GM12878 (cell line): ENCODE measurements at regions of chr6 and their contacts with region 1.

Region 1: DNA sequence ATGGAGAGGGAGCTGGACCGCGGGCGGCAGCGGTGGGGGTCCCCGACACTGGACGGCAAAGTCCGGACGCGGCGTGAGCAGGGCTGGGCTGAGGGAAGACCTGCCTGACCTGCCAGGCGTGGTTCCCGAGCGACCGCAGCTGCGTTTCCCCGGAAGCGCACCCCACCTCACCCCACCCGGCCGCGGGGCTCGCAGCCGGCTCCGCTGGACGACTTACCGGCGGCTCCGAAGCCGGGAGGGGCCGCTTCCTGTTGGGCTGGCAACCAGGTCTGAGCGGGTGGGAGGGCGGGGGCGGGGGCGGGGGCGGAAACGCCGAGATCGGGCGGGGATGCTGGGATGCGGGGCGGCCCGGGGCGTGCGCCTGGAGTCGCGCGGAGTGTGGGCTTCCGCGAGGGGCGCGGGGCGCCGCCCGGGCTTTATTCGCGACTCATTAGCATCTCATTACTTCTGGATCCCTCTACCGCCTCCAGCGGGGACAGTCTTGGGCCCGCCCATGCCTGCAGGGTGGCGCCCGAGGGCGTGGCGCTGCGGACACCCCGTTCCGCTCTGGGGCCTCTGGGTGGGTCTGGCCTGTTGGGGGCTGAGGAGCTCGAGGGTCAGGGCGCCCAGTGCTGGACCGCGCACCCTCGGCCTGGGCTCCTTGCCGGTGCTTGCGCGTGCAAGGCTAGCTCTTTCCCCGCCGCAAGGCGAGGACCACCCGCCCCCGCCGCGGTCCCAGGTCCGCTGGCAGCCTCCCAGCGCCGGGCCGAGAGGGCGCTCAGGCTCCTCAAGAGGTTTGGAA is at the start of gene MICAL1:
- DNase-seq: peak; percentile 45
- ATAC-seq: peak; percentile 78
- H3K4me3 ChIP-seq: peak within 1 kb of the TSS; percentile 89
- H3K27ac ChIP-seq: peak within 1 kb of the TSS; percentile 98
- H3K4me1 ChIP-seq: peaks cover 54% of the 10 kb centered on the region
- H3K27me3 ChIP-seq: no peaks in the 10 kb centered on the region
- CTCF ChIP-seq: peak in 2 of 3 experiments; percentile 19 to 45; a peak in 4 of 6 replicates
- EP300 ChIP-seq: 0 out of 4 replicates have a peak, but pooled peaks of 1 of the 2 experiments have one; percentile 20
- POLR2A ChIP-seq: peak; percentile 82
- RAD21 ChIP-seq: no peak
- polyA plus RNA-seq, gene MICAL1: 0.32 to 1.3 TPM

Region 2: DNA sequence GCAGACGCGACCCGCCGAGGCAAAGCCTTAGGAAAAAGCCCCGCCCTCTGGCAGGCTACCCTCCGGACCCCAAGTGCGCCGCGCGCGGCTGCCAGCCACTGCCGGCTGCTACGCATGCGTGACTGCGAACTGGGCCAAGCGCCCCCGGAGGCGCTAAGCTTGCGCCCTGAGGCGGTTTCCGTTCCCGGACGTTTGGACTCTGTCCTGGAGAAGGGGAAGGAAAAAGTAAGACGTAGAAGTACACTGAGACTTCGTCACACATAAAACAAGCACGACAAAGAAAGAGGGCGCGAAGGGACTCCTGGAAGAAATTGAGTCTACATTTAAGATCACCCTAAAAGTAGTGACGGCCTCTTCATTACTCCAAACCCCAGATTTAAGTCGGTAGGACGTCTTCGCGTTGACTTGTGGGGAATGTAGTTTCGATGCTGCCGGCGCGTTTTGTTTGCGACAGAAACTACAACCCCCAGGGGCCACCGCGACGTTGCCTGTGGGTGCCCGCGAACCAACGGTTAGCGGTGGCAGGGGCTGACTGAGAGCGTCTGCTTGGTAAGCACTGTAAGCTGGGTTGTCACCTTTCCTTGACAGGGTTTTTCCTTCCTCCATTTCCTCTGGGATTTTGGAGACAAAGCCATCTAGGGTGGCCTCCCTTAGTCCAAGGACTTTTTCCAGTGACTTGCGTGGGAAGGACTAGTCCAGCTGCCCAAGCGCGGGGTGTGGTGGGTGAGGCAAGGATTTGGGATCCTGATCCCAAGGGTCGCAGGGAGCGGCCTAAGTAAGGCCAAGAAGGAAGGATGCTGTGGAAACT is 360.5 kb before region 1 on chr6 and contains the start of gene CEP57L1:
- CTCF ChIA-PET with region 1: no interaction called
- POLR2A ChIA-PET with region 1: interaction called, 5 read pairs
- RAD21 ChIA-PET with region 1: no interaction called
- SMC1A ChIA-PET with region 1: no interaction called
- in situ Hi-C with region 1: no loop called
- intact Hi-C with region 1: loop called (anchors 5 kb)
- DNase-seq: peak; percentile 88
- ATAC-seq: peak; percentile 81
- H3K4me3 ChIP-seq: peak within 1 kb of the TSS; percentile 90
- H3K27ac ChIP-seq: peak within 1 kb of the TSS; percentile 94
- H3K4me1 ChIP-seq: no peaks in the 10 kb centered on the region
- H3K27me3 ChIP-seq: no peaks in the 10 kb centered on the region
- CTCF ChIP-seq: peak; percentile 14 to 23 (median 14); a peak in 2 of 6 replicates
- EP300 ChIP-seq: no peak
- POLR2A ChIP-seq: peak; percentile 84
- RAD21 ChIP-seq: no peak
- polyA plus RNA-seq, gene CEP57L1: 22.6 to 24.0 TPM

Region 3: GRCh38 chr6:109472132-109472995 is 16.7 kb after region 1 on chr6:
- CTCF ChIA-PET with region 1: interaction called, 8 read pairs
- POLR2A ChIA-PET with region 1: interaction called, 5 read pairs
- RAD21 ChIA-PET with region 1: interaction called, 12 read pairs
- SMC1A ChIA-PET with region 1: interaction called, 148 read pairs
- in situ Hi-C with region 1: no loop called
- intact Hi-C with region 1: loop called (anchors 2 kb)
- DNase-seq: no peak
- ATAC-seq: peak; percentile 81
- H3K4me3 ChIP-seq: peak overlapping the region; percentile 39; the same call in 1 of the 2 replicates
- H3K27ac ChIP-seq: peak overlapping the region; percentile 62
- H3K4me1 ChIP-seq: peaks cover 28% of the 10 kb centered on the region
- H3K27me3 ChIP-seq: no peaks in the 10 kb centered on the region
- CTCF ChIP-seq: peak; percentile 17 to 25 (median 19); a peak in 4 of 6 replicates
- EP300 ChIP-seq: no peak; a peak in 1 of 4 replicates
- POLR2A ChIP-seq: no peak
- RAD21 ChIP-seq: no peak

Region 4: GRCh38 chr6:109482905-109483735 is 27.4 kb after region 1 on chr6 and contains the start of gene ZBTB24:
- CTCF ChIA-PET with region 1: interaction called, 35 read pairs
- POLR2A ChIA-PET with region 1: interaction called, 132 read pairs
- RAD21 ChIA-PET with region 1: interaction called, 97 read pairs
- SMC1A ChIA-PET with region 1: interaction called, 148 read pairs
- in situ Hi-C with region 1: no loop called
- intact Hi-C with region 1: loop called (anchors 1 kb)
- DNase-seq: peak; percentile 41
- ATAC-seq: peak; percentile 89
- H3K4me3 ChIP-seq: peak within 1 kb of the TSS; percentile 86
- H3K27ac ChIP-seq: peak within 1 kb of the TSS; percentile 73
- H3K4me1 ChIP-seq: no peaks in the 10 kb centered on the region; the same call in 1 of the 2 replicates
- H3K27me3 ChIP-seq: no peaks in the 10 kb centered on the region
- CTCF ChIP-seq: no peak
- EP300 ChIP-seq: no peak
- POLR2A ChIP-seq: peak; percentile 86
- RAD21 ChIP-seq: no peak
- polyA plus RNA-seq, gene ZBTB24: 2.9 to 3.0 TPM